ENCODE measurements at regions of chr1 and their contacts with region 1.

Region 1: DNA sequence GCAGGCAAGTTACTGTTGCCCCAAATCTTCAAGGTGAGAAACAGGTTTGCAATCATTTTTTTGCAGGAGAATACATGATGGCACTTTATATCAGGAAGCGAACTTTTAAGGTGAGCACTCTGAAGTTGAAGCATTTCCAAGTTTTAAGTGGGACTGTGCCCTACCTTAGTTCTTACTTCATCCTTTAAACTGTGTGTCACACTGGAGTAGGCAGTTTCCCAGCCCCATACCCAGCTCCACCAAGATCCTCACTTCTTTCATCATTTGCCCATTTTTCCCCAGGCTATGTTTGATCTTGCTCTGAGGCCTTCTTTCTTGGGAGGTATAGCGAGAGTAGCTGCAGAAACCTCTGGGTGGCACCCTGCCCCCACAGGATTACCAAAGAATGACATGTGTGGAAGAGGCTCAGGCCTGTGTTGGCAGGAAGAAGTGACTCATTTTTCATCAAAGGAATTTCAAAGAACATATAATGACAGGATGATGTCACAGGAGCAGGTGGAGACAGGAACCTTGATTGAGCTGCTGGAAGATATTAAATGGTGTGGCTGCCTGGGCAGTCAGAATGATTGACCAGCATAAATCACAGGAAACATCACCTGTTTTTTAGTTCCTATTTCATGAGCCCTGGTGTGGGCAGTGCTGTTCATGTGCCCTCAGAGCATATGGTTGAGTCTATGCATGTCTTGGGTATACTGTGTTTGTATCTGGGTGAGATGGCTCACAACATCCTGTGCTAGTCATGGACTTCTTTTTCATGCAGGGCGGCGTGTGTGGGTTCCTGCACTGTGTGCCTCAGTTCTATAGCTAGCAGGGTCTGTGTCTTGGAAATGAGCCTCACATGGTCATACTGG is 20.8 kb upstream of the MACF1 start:
- DNase-seq: peak; percentile 74
- ATAC-seq: peak; percentile 22
- H3K4me3 ChIP-seq: no peak overlapping the region
- H3K27ac ChIP-seq: peak overlapping the region; percentile 0; the same call in 1 of the 2 replicates
- H3K4me1 ChIP-seq: peaks cover 19% of the 10 kb centered on the region
- H3K27me3 ChIP-seq: no peaks in the 10 kb centered on the region
- CTCF ChIP-seq: peak; percentile 27
- POLR2A ChIP-seq: no peak
- RAD21 ChIP-seq: peak; percentile 39

Region 2: DNA sequence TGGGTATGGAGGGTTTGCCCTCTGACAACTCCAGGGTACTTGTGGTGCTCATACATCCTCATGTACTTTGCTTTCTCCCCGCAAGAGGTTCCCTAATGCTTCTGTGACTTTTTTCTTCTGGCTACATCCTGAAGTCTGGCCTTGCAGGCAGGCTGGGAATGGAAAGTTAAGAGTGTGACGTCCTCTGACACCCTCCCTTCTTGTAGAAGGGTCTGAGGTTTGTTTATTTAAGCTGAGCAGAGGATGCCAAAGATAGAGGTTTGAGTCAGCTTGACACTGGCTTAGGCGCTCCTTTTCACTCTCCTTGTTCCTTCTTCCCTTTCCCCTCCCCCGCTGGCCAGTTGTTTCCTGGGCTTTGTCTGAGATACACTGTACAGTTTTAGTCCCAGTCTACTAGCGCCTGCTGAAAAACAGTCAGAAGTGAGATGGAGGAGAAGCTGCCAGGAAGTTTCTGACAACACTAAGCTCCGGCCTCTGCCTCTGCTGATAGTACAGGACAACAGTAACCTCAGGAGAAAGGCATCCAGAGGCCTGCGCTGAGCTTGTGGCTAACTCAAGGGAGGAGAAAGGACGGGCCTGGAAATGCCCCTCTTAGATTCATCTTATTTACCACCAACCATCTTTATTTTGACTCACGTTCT is 20.8 kb after region 1 on chr1 and contains the start of gene MACF1:
- CTCF ChIA-PET with region 1: interaction called, 4 read pairs
- POLR2A ChIA-PET with region 1: interaction called, 11 read pairs
- dilution Hi-C with region 1: no loop called
- in situ Hi-C with region 1: no loop called
- intact Hi-C with region 1: no loop called
- DNase-seq: peak; percentile 98
- ATAC-seq: peak; percentile 83
- H3K4me3 ChIP-seq: peak within 1 kb of the TSS; percentile 54
- H3K27ac ChIP-seq: peak within 1 kb of the TSS; percentile 91
- H3K4me1 ChIP-seq: peaks cover 2% of the 10 kb centered on the region
- H3K27me3 ChIP-seq: no peaks in the 10 kb centered on the region
- CTCF ChIP-seq: peak; percentile 59
- POLR2A ChIP-seq: peak; percentile 52
- RAD21 ChIP-seq: peak; percentile 65
- total RNA-seq, gene MACF1: 368 and 369 TPM in 2 replicates

Region 3: DNA sequence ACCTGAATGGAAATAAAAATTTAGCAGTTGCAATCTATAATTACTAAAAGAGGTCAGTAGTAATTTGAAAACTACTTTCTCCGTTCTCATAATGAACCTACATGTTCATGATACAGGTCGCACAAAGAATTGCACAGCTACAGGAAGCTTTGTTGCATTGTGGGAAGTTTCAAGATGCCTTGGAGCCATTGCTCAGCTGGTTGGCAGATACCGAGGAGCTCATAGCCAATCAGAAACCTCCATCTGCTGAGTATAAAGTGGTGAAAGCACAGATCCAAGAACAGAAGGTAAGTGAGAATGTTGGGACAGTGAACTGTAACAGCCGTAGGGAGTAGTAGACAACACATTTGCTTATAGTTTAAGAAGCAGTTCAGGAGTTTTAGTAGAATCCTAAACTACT is 238.9 kb after region 1 on chr1:
- CTCF ChIA-PET with region 1: no interaction called
- POLR2A ChIA-PET with region 1: no interaction called
- dilution Hi-C with region 1: no loop called
- in situ Hi-C with region 1: no loop called
- intact Hi-C with region 1: no loop called
- DNase-seq: no peak
- ATAC-seq: no peak
- H3K4me3 ChIP-seq: no peak overlapping the region
- H3K27ac ChIP-seq: no peak overlapping the region
- H3K4me1 ChIP-seq: no peaks in the 10 kb centered on the region
- H3K27me3 ChIP-seq: no peaks in the 10 kb centered on the region
- CTCF ChIP-seq: no peak
- POLR2A ChIP-seq: no peak
- RAD21 ChIP-seq: no peak

Measured in IMR-90 (cell line).